ENCODE measurements at regions of chr10 and their contacts with region 1.

Region 1: DNA sequence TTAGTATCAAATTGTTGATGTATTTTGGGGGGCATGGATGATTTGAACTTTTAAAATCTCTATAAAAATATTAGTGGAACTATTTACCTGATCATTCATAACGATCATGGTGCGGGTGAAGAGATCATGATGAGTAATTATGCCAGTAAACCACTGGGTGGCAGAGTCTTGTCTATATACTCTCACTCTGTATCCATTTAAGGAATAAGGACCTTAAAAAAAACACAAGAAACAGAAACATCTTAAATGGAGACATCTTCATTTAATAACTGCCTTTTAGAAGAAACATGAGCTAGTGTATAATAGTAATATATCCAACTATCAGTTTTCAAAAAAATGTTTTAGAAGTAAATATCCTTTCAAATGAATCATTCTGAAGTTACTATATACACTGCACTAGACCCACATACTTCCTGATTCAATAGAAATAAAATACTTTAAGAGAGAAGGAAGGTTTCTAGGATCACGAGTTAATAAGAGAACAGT is 84.0 kb downstream of the NRBF2 start:
- DNase-seq: peak in 1 of 2 experiments; percentile 64
- H3K4me3 ChIP-seq: no peak overlapping the region
- H3K27ac ChIP-seq: peak overlapping the region; percentile 0; the same call in 1 of the 2 replicates
- H3K4me1 ChIP-seq: no peaks in the 10 kb centered on the region
- H3K27me3 ChIP-seq: no peaks in the 10 kb centered on the region
- CTCF ChIP-seq: peak; percentile 91

Region 2: DNA sequence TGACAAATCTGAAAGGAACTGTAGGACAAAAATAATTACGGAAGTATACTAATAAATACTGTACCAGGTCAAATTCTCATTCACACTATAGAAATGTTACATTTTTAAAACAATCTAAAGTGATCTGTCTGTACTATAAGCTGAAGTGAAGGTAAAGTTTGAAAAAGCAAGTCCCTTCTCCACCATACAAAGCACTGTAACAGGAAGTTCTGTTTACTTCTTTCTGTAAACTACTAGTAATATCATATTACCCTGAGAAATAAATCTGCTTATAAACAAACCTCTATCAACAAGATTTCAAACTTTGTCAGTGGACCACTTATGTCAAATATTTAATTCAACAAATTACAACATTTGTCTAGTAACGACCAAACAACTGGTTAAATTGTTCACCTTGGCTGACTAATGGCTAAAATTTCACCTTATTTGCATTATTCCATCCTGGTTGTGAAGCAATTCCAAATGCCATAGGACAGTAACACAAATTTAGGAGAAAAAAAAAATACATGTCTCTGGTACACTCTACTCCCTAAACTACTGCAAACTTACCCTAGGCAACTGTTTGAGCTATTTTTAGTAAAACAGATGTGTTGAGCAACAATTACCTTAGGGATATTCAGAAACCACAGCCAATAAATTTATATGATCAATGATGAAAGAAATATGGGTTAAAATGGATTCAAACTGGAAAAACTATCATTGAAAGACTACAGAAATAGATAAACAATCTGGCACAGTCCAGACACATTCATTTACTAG is 41.9 kb after region 1 on chr10:
- CTCF ChIA-PET with region 1: no interaction called
- POLR2A ChIA-PET with region 1: interaction called, 10 read pairs
- intact Hi-C with region 1: no loop called
- DNase-seq: no peak
- H3K4me3 ChIP-seq: no peak overlapping the region
- H3K27ac ChIP-seq: no peak overlapping the region; the same call in 1 of the 2 replicates
- H3K4me1 ChIP-seq: peaks cover 41% of the 10 kb centered on the region
- H3K27me3 ChIP-seq: no peaks in the 10 kb centered on the region
- CTCF ChIP-seq: no peak

Region 3: GRCh38 chr10:63465293-63466143 is 248.4 kb after region 1 on chr10 and contains the start of gene JMJD1C:
- CTCF ChIA-PET with region 1: no interaction called
- POLR2A ChIA-PET with region 1: no interaction called
- intact Hi-C with region 1: loop called (anchors 2 kb)
- DNase-seq: peak; percentile 65 to 80
- H3K4me3 ChIP-seq: peak within 1 kb of the TSS; percentile 94
- H3K27ac ChIP-seq: peak within 1 kb of the TSS; percentile 33
- H3K4me1 ChIP-seq: peaks cover 23% of the 10 kb centered on the region
- H3K27me3 ChIP-seq: no peaks in the 10 kb centered on the region
- CTCF ChIP-seq: no peak
- total RNA-seq, gene JMJD1C: 68.6 and 78.7 TPM in 2 replicates

Region 4: GRCh38 chr10:63515002-63515763 is 298.0 kb after region 1 on chr10:
- CTCF ChIA-PET with region 1: no interaction called
- POLR2A ChIA-PET with region 1: no interaction called
- intact Hi-C with region 1: loop called (anchors 5 kb)
- DNase-seq: peak; percentile 47 to 48
- H3K4me3 ChIP-seq: no peak overlapping the region
- H3K27ac ChIP-seq: peak overlapping the region; percentile 46
- H3K4me1 ChIP-seq: peaks cover 38% of the 10 kb centered on the region
- H3K27me3 ChIP-seq: no peaks in the 10 kb centered on the region
- CTCF ChIP-seq: no peak

Region 5: DNA sequence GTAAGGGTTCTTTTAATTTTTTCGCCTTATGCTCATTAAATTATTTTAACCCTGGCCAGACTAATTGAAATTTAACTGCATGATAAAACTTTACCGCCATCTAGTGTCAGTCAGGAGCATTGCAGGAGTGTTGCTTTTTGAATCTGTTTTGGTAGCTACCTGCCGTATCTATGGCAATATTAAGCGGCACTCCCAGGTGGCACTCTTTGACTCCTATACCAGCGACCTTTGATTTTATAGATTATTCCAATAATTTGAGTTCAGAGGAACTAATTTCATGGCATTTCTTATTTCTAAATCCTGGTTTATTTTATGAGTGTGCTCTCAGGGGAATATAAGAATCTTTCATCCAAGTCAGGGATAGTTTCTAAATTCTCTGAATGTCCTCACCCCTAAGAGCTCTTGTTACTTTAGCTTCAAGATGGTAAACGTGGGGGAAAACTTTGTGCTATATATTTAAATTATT is 502.9 kb after region 1 on chr10:
- CTCF ChIA-PET with region 1: interaction called, 7 read pairs
- POLR2A ChIA-PET with region 1: no interaction called
- intact Hi-C with region 1: loop called (anchors 1 kb)
- DNase-seq: peak; percentile 53 to 65
- H3K4me3 ChIP-seq: no peak overlapping the region
- H3K27ac ChIP-seq: no peak overlapping the region
- H3K4me1 ChIP-seq: peaks cover 4% of the 10 kb centered on the region; the same call in 1 of the 2 replicates
- H3K27me3 ChIP-seq: no peaks in the 10 kb centered on the region
- CTCF ChIP-seq: peak; percentile 100